Kidney (tissue), 22 donors: ENCODE measurements at regions of chr17 and their contacts with region 1.

Region 1: DNA sequence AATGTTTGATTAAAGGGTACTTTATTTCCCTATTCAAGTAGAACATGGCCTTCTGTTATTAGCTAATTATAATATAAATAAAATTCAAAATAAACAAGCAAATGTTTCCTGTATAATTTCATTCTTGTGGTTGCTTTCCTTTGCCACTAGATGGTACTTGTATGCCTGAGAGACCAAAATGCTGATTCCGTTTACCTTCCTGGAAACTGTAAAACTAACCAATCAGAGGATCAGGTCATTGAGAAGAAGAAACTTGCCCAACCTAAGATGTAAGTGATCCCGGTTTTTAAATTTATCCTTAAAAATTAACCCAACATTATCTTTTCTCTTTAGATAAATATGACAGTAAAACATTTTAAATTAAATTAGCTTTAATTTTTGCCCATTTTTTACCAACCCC is 8.1 kb upstream of the ABCA5 start:
- DNase-seq: no peak
- H3K4me3 ChIP-seq: no peak overlapping the region
- H3K27ac ChIP-seq: no peak overlapping the region
- H3K4me1 ChIP-seq: no peaks in the 10 kb centered on the region
- H3K27me3 ChIP-seq: no peaks in the 10 kb centered on the region
- CTCF ChIP-seq: peak; percentile 59

Region 2: DNA sequence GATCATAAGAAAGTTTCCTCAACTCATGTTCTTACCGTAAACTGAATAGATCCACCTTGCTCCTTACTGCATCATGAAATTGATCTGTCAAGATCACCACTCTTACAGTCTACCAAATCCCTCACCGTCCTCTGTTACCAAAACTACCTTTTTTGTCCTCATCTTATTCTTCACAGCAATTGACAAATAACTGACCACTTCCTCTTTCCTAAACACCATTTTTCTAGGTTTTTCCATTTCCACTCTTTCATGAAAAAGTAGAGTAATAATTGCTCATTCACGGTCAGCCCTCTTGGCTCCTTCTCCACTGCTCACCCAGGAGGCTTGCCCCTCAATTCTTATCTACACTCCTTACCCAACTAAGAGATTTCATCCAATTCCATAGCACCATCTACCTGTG is 53.1 kb before region 1 on chr17:
- intact Hi-C with region 1: no loop called
- DNase-seq: no peak
- H3K4me3 ChIP-seq: no peak overlapping the region
- H3K27ac ChIP-seq: no peak overlapping the region
- H3K4me1 ChIP-seq: no peaks in the 10 kb centered on the region
- H3K27me3 ChIP-seq: no peaks in the 10 kb centered on the region
- CTCF ChIP-seq: no peak

Region 3: GRCh38 chr17:69404382-69404781 is 69.3 kb after region 1 on chr17:
- intact Hi-C with region 1: no loop called
- DNase-seq: no peak
- H3K4me3 ChIP-seq: no peak overlapping the region
- H3K27ac ChIP-seq: no peak overlapping the region
- H3K4me1 ChIP-seq: no peaks in the 10 kb centered on the region
- H3K27me3 ChIP-seq: no peaks in the 10 kb centered on the region
- CTCF ChIP-seq: no peak

Region 4: DNA sequence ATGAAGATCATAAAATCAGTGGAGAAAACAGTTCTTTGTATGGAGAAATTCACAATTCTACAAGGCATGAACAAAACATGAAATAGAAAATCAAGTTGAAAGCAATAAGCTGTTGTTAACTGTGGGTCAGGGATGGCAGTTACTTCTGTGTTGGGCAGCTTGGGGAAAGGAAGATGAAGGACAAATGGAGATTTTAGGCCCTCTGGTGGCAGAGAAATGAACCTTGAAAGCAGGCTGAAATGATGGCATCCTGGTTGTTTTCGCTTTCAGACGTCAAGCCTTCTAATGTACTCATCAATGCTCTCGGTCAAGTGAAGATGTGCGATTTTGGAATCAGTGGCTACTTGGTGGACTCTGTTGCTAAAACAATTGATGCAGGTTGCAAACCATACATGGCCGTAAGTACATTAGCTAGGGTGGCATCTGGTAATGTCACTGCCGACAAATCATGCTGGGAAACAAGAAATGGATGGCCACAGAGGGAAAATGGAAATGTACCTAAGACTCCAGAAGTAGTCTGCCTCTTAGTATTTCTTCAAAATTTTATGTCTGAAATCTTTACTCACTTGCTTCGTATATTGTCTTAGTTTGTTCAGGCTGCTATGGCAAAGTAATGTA is 188.3 kb after region 1 on chr17:
- intact Hi-C with region 1: loop called (anchors 10 kb)
- DNase-seq: peak in 3 of 5 donors; percentile 22 to 71 (median 58)
- H3K4me3 ChIP-seq: peak overlapping the region in 1 of 3 donors; percentile 36
- H3K27ac ChIP-seq: no peak overlapping the region
- H3K4me1 ChIP-seq: no peaks in the 10 kb centered on the region
- H3K27me3 ChIP-seq: no peaks in the 10 kb centered on the region
- CTCF ChIP-seq: peak; percentile 67